ENCODE measurements at regions of chr20 and their contacts with region 1.

Region 1: GRCh38 chr20:8043687-8044282 is 24.2 kb upstream of the TMX4 start:
- DNase-seq: peak in 1 of 2 donors; percentile 84
- ATAC-seq: peak; percentile 64 to 84 (median 76)
- H3K4me3 ChIP-seq: no peak overlapping the region
- H3K4me3 Mint-ChIP-seq: no peak overlapping the region
- H3K27ac ChIP-seq: no peak overlapping the region
- H3K27ac Mint-ChIP-seq: no peak overlapping the region
- H3K4me1 ChIP-seq: no peaks in the 10 kb centered on the region
- H3K4me1 Mint-ChIP-seq: peaks cover 0 to 4% of the 10 kb centered on the region in 2 donors
- H3K27me3 ChIP-seq: no peaks in the 10 kb centered on the region
- H3K27me3 Mint-ChIP-seq: peaks cover 10 to 21% of the 10 kb centered on the region in 2 donors
- CTCF ChIP-seq: peak; percentile 97

Region 2: DNA sequence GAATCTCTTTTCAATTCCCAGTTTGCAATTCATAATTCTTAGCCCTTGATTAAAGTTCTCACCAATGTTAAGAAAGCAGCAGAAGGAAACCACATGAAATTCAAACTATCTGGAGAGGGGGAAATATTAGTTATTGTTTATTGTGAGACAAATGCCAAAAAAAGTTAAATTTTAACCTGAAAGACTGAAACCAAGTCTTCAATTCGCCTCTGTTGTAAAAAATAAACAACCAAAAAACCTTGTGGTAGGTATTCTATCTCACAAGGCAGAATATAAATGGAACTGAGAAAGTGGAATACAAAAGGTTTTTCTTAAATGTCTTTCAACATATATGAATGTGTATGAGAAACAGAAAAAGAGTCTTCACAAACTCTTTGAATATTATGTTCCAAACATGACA is 49.0 kb before region 1 on chr20:
- intact Hi-C with region 1: no loop called
- DNase-seq: no peak
- ATAC-seq: no peak
- H3K4me3 ChIP-seq: no peak overlapping the region
- H3K4me3 Mint-ChIP-seq: no peak overlapping the region
- H3K27ac ChIP-seq: no peak overlapping the region
- H3K27ac Mint-ChIP-seq: no peak overlapping the region
- H3K4me1 ChIP-seq: no peaks in the 10 kb centered on the region
- H3K4me1 Mint-ChIP-seq: no peaks in the 10 kb centered on the region
- H3K27me3 ChIP-seq: no peaks in the 10 kb centered on the region
- H3K27me3 Mint-ChIP-seq: no peaks in the 10 kb centered on the region
- CTCF ChIP-seq: no peak

Region 3: DNA sequence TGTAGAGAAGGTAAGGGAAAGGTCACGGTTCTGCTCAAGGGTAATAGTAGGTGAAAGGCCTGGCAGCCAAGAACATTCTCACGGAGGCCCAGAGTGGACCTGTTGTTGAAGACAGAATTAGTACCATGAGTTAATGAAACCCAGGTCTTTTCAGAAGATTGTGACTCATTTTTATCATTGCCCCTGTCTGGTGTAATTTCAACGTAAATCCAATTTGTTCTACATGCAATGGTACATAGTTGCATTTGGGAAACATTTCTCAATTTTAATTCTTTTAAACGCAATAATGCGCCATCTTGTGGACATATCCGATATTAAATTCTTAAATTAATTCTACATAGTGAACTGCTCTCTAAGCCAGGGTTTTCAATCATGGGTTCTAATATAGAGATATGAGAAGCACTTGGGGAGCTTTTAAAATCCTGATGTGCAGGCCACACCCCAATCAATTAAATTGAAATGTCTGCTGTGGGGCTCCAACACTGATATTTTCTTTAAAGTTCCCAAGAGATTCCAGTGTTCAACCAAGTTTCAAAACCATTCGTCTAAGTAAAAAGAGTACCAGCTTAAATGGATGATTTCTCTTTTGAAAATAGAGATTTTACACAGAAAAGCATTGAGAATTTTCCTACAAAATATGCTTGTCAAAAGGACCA is 345.7 kb after region 1 on chr20:
- intact Hi-C with region 1: loop called (anchors 10 kb)
- DNase-seq: peak in 1 of 2 donors; percentile 69
- ATAC-seq: peak in 2 of 3 donors; percentile 49 to 54
- H3K4me3 ChIP-seq: no peak overlapping the region
- H3K4me3 Mint-ChIP-seq: no peak overlapping the region
- H3K27ac ChIP-seq: no peak overlapping the region
- H3K27ac Mint-ChIP-seq: no peak overlapping the region
- H3K4me1 ChIP-seq: no peaks in the 10 kb centered on the region
- H3K4me1 Mint-ChIP-seq: peaks cover 27 to 30% of the 10 kb centered on the region in 2 donors
- H3K27me3 ChIP-seq: no peaks in the 10 kb centered on the region
- H3K27me3 Mint-ChIP-seq: no peaks in the 10 kb centered on the region
- CTCF ChIP-seq: peak; percentile 68